ENCODE measurements at regions of chr15 and their contacts with region 1.

Region 1: DNA sequence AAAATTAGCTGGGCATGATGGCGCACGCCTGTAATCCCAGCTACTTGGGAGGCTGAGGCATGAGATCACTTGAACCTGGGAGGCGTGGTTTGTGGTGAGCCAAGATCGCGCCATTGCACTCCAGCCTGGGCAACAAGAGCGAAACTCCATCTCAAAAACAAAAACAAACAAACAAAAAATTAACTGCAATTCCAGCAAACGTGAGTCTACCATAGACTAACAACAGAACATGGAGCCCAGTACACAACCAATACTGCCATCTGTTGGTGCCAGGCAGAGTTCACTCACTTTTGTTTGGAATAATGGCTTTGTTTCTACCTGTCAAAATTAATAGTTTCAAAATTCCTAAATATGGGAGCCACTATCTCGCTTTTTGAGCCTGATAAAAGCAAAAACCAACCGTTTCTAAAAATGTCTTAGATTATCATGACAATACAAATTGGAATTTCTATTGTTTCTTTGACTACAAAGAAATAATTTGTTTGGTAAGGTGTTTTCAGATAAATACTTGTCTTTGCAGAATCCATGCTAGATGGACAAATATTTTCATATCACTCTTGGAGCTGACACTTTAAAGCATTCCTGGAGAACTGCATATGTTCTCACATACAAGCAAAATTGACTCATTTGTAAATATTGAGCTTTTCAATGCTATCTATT is 45.0 kb downstream of the GPR176 start:
- DNase-seq: no peak
- ATAC-seq: no peak

Region 2: GRCh38 chr15:39495871-39496840 is 378.9 kb before region 1 on chr15:
- intact Hi-C with region 1: no loop called
- DNase-seq: no peak
- ATAC-seq: no peak

Region 3: DNA sequence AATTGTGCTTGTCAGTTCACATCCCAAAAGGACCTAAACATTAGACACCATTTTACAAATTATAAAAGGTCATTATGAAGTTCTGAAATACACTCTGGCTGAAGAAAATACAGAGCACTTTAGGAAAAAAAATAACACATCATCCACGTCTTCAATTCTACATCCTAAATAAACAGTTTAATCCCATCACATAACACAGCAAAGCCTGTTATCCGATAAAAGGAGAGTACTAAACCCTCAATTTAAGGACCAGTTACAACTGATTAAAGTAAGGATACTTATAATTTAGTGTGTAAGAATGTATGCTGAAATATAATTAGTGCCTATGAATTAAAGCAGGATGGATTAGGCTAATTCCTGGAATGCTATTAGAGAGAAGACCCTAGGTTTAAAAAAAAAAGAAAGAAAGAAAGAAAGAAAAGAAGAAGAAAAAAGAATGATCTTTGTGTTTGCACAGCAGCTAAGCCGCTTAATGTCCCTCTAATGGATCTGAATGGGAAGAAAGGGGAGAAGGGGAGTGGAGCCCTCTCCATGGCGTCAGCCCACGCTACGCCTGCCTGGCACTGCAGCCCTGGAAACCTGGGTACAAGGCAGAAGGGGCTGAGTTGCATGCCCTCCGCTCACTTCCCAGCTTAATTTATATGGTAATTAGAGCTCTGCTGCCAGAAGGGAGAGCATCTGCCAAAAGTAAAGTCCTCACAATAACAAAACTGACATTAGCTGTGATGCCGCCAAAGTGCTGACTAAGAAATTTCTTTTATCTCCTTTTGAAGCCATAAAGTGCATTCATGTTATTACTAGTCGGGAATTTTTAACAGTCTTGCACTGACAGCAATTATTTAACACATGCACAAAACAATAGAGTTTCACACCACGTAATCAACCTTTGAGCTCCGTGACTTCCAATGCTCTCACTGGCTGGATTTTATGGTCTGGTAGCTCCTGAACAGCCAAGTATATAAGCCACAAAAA is 182.4 kb before region 1 on chr15:
- intact Hi-C with region 1: loop called (anchors 10 kb)
- DNase-seq: no peak
- ATAC-seq: no peak

Region 4: GRCh38 chr15:39782441-39783138 is 92.4 kb before region 1 on chr15 and contains the start of gene FSIP1:
- intact Hi-C with region 1: loop called (anchors 5 kb)
- DNase-seq: peak; percentile 98
- ATAC-seq: peak; percentile 99
- total RNA-seq, gene FSIP1: 0.91 TPM